Mammary epithelial cell (primary cell): ENCODE measurements at regions of chr14 and their contacts with region 1.

Region 1: DNA sequence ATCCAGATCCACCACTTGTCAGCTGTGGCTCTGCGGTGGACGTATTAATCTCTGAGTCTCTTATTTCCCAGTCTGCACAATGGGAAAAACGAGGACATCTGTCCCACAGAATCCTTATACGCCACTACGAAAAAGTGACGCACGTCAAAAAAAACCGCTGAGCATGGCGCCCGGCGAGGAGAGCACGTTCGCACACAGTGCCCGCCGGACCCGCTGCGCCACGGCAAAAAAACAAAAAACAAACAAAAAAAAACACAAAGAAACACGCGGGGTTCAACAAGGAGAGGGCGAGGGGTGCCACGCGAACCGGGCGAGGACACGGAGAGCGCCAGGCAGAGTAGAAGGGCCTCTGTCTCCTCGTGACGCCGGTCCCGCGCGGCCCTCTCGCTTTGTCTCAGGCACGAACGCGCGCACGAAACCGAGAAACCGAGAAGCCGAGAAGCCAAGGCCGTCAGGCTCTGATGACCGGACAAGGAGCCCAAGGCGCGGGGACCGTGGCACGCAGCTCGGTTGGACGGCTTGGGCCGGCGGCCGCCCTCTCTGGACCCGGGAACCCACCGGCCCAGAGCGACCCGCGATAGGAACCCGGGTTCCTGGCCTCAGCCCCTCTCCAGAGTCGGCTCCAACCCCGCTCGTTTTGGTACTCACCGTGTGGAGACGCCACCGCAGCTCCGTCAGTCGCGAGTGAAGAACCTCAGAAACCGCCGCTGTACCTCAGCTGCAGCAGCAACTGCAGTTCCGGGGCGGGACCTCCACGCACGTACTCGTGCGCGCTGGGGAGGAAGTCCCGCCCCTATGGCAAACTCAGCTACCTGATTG is at the start of gene DDX24:
- DNase-seq: peak; percentile 95
- H3K4me3 ChIP-seq: peak within 1 kb of the TSS; percentile 93 to 99 (median 96)
- H3K27ac ChIP-seq: peak within 1 kb of the TSS; percentile 95
- H3K4me1 ChIP-seq: peaks cover 18% of the 10 kb centered on the region
- H3K27me3 ChIP-seq: no peaks in the 10 kb centered on the region
- CTCF ChIP-seq: no peak
- total RNA-seq, gene DDX24: 94.7 to 156 TPM

Region 2: DNA sequence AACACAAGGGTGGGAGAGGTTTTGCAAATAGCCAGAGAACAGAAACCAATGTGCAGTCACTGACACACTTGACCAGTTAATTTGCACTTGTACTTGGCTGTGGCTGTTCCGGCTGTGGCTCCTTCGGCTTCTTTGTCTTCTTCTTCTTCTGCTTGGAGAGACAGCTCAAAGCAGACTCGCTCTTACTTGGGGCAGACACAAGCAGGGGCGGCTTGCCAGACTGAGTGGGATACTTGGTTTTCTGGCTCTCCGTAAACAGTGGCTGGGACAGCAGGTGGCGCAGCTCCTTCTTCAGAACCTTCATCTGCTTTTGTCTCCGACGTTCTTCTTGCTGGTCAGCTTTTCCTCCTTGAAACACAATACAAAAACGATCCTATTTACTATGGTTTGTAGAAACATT is 29.6 kb before region 1 on chr14:
- CTCF ChIA-PET with region 1: no interaction called
- dilution Hi-C with region 1: no loop called
- in situ Hi-C with region 1: no loop called
- intact Hi-C with region 1: loop called (anchors 2 kb)
- DNase-seq: peak; percentile 24
- H3K4me3 ChIP-seq: no peak overlapping the region
- H3K27ac ChIP-seq: no peak overlapping the region
- H3K4me1 ChIP-seq: no peaks in the 10 kb centered on the region
- H3K27me3 ChIP-seq: no peaks in the 10 kb centered on the region
- CTCF ChIP-seq: peak in 1 of 2 donors; percentile 33

Region 3: GRCh38 chr14:94066089-94066676 is 14.5 kb before region 1 on chr14:
- CTCF ChIA-PET with region 1: no interaction called
- dilution Hi-C with region 1: no loop called
- in situ Hi-C with region 1: no loop called
- intact Hi-C with region 1: loop called (anchors 2 kb)
- DNase-seq: peak; percentile 66
- H3K4me3 ChIP-seq: no peak overlapping the region
- H3K27ac ChIP-seq: peak overlapping the region; percentile 50
- H3K4me1 ChIP-seq: peaks cover 23% of the 10 kb centered on the region
- H3K27me3 ChIP-seq: no peaks in the 10 kb centered on the region
- CTCF ChIP-seq: no peak

Region 4: GRCh38 chr14:94173885-94174603 is 93.4 kb after region 1 on chr14 and contains the start of gene PPP4R4:
- CTCF ChIA-PET with region 1: no interaction called
- dilution Hi-C with region 1: no loop called
- in situ Hi-C with region 1: no loop called
- intact Hi-C with region 1: loop called (anchors 5 kb)
- DNase-seq: peak; percentile 71
- H3K4me3 ChIP-seq: peak within 1 kb of the TSS; percentile 68 to 87 (median 70)
- H3K27ac ChIP-seq: peak within 1 kb of the TSS; percentile 45
- H3K4me1 ChIP-seq: peaks cover 45% of the 10 kb centered on the region
- H3K27me3 ChIP-seq: no peaks in the 10 kb centered on the region
- CTCF ChIP-seq: no peak
- total RNA-seq, gene PPP4R4: 6.3 to 19.3 TPM

Region 5: DNA sequence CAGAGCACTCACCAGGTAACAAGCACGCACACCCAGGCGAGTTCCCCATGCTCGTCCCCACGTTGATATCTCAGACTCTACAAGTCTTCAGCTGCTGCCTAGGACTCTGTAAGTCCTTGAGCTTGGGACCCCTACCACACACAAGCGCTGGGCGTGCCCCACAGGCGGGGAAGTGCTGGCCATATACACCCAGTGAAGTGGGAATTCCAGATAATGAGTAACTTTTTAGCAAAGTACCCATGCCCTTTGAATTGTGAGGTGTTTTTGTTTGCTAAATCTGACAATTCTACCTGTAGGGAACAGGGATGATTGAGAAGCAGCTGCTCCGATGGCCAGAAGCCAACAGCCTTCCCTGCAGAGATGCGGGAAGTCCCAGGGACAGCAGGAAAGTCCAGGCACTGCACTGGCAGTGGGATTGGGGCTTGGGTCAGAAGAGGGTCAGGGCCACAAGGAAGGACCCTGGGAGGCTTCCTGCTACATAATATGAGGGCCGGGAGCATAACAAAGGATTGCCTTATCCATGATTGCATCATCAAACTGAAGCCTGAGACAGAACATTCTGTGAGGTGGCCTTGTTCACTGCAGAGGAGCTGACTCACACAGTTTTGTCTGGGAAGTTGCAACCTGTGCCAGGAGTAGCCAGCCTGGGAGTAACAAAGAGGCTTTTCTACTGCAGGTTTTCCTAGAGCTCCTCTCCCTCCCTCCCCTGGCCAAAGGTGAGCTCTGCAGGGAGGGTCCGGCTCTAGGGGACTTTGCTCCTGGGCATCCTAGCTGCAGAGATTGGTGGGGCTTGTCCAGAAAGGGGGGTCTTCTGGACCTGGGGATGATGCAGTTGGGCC is 518.4 kb after region 1 on chr14:
- CTCF ChIA-PET with region 1: no interaction called
- dilution Hi-C with region 1: no loop called
- in situ Hi-C with region 1: no loop called
- intact Hi-C with region 1: no loop called
- DNase-seq: peak; percentile 99
- H3K4me3 ChIP-seq: peak overlapping the region in 1 of 3 experiments; percentile 8
- H3K27ac ChIP-seq: peak overlapping the region; percentile 93
- H3K4me1 ChIP-seq: peaks cover 43% of the 10 kb centered on the region
- H3K27me3 ChIP-seq: no peaks in the 10 kb centered on the region
- CTCF ChIP-seq: peak; percentile 31 to 37